Posterior cingulate gyrus (tissue), 11 donors: ENCODE measurements at regions of chr16 and their contacts with region 1.

Region 1: GRCh38 chr16:10181196-10182162 is 749 bp downstream of the GRIN2A start:
- DNase-seq: peak; percentile 73 to 98 (median 80)

Region 2: GRCh38 chr16:9159839-9160550 is 1021.5 kb before region 1 on chr16:
- intact Hi-C with region 1: loop called (anchors 2 kb)
- DNase-seq: peak; percentile 66 to 98 (median 82)

Region 3: GRCh38 chr16:9256196-9256595 is 925.3 kb before region 1 on chr16:
- intact Hi-C with region 1: loop called (anchors 2 kb)
- DNase-seq: no peak

Region 4: GRCh38 chr16:9297437-9298113 is 883.9 kb before region 1 on chr16:
- intact Hi-C with region 1: loop called (anchors 2 kb)
- DNase-seq: peak in 8 of 10 donors; percentile 18 to 91 (median 55)

Region 5: GRCh38 chr16:9647981-9648712 is 533.3 kb before region 1 on chr16:
- intact Hi-C with region 1: loop called (anchors 5 kb)
- DNase-seq: no peak

Region 6: DNA sequence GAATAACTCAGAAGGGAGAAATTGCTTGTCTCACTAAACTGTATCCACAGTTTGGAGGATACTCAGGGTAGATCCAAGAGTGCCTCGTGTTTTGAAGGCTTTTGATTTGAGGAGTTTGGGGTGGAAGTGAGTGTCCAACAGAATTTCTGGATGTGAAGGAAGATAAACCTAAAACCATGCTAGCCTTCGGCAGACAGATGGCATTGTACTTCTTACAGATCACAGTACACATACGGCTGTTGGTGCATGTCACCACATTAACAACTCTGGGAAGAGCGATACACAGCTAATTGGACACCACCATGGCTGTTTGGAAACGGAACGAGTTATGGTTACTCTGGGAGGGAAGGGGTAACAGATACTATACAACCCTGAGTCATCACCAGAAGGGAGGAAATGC is 419.6 kb before region 1 on chr16:
- intact Hi-C with region 1: loop called (anchors 2 kb)
- DNase-seq: peak in 1 of 10 donors; percentile 18

Region 7: GRCh38 chr16:10039220-10040096 is 142.0 kb before region 1 on chr16:
- intact Hi-C with region 1: loop called (anchors 5 kb)
- DNase-seq: peak in 9 of 10 donors; percentile 40 to 95 (median 64)